Common myeloid progenitor, CD34-positive (primary cell): ENCODE measurements at regions of chr12 and their contacts with region 1.

Region 1: DNA sequence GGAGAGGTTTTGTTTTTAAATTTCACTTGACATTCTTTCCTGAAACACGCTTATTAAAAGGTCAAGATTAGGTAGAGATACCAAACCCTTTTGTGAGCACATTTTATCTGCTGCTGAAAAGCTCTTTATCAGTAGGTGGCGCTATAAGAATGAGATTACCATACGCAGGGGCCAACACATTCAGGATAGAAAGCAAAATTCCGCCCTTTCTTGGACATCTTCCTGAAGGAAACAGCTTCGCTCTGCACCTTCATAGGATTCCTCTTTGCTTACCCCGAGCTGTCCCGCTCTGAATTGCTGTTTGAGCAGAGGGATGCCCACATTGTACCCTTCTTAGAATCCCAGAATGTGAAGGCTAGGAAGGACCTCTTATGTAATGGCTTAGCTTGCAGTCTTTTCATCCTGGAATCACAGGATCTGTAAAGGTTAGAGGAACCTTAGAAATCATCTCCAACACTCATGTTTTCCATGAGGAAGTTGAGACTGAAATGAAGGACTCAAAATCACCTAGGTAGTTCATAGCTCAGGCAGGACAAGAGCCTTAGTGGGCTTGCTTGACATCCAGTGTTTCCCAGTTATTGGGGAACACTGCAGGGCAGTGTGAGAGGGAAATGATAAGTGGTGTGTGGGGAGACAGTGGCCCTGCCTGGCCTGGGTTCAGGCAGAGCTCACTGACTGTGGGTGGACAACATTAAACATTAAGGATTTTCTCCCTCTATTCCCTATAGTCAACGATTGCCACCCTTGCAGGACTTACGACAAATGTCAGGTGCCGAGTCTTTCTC is 38.7 kb upstream of the CRY1 start:
- DNase-seq: peak; percentile 39 to 51 (median 40)
- H3K4me3 ChIP-seq: no peak overlapping the region
- H3K27ac ChIP-seq: no peak overlapping the region
- H3K4me1 ChIP-seq: peaks cover 0 to 6% (median 4%) of the 10 kb centered on the region in 4 experiments
- H3K27me3 ChIP-seq: no peaks in the 10 kb centered on the region

Region 2: GRCh38 chr12:107115119-107115518 is 16.9 kb before region 1 on chr12:
- CTCF ChIA-PET with region 1: interaction called, 28 read pairs
- POLR2A ChIA-PET with region 1: no interaction called
- DNase-seq: no peak
- H3K4me3 ChIP-seq: no peak overlapping the region
- H3K27ac ChIP-seq: no peak overlapping the region
- H3K4me1 ChIP-seq: no peaks in the 10 kb centered on the region
- H3K27me3 ChIP-seq: peaks cover 0 to 6% (median 0%) of the 10 kb centered on the region in 5 experiments

Region 3: GRCh38 chr12:107145397-107145796 is 13.4 kb after region 1 on chr12:
- CTCF ChIA-PET with region 1: interaction called, 32 read pairs
- POLR2A ChIA-PET with region 1: no interaction called
- DNase-seq: no peak
- H3K4me3 ChIP-seq: no peak overlapping the region
- H3K27ac ChIP-seq: no peak overlapping the region
- H3K4me1 ChIP-seq: no peaks in the 10 kb centered on the region
- H3K27me3 ChIP-seq: no peaks in the 10 kb centered on the region

Region 4: GRCh38 chr12:107223821-107224220 is 91.8 kb after region 1 on chr12:
- CTCF ChIA-PET with region 1: no interaction called
- POLR2A ChIA-PET with region 1: no interaction called
- DNase-seq: peak in 2 of 3 donors; percentile 8 to 21
- H3K4me3 ChIP-seq: no peak overlapping the region
- H3K27ac ChIP-seq: no peak overlapping the region
- H3K4me1 ChIP-seq: no peaks in the 10 kb centered on the region
- H3K27me3 ChIP-seq: peaks cover 0 to 8% (median 0%) of the 10 kb centered on the region in 5 experiments

Region 5: DNA sequence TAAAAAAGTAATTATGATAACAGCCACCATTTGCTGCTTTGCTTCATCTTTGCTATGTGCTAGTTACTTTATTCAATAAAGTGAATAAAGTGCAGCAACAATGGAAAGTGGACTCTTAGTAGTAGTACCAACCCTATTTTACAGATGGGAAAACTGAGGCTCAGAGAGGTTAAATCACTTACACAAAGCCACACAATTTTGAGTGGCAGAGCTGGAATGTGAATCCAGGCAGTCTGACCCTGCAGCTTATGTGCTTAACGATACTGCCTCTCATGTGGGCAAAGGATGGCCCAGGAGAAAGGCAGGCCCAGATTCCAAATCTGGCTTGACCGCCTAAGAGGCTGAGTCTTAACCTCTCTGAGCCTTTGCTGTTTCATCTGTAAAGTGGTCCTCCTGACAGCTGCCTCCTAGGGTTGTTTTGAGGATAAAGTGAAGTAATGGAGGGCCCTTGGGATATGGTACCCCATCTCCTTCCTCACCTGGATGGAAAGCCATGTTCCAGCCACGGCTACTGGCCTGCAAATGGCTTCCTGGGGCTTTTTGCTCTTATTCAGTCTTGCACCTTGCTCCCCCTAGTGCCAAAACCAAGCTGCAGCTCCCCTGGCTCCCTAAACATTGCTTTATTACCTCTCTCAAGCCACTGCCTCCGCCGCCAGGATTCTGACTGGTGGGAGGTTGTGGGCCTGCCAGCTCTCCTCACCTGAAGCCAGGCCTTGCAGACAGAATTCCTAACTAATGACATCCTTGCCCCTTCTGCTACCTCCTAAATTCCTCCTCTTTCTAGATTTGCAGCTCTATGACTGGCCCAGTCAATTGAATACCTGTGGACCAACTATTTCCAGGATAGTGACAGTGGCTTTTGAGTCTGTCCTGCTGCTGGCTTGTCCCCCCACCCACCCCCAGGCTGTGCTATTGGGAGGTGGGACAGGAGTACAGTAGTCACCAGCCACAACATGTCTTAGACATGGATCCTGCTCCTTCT is 270.3 kb after region 1 on chr12:
- CTCF ChIA-PET with region 1: interaction called, 162 read pairs
- POLR2A ChIA-PET with region 1: no interaction called
- DNase-seq: peak; percentile 72 to 79 (median 78)
- H3K4me3 ChIP-seq: no peak overlapping the region
- H3K27ac ChIP-seq: no peak overlapping the region
- H3K4me1 ChIP-seq: peaks cover 0 to 12% (median 9%) of the 10 kb centered on the region in 4 experiments
- H3K27me3 ChIP-seq: no peaks in the 10 kb centered on the region

Region 6: DNA sequence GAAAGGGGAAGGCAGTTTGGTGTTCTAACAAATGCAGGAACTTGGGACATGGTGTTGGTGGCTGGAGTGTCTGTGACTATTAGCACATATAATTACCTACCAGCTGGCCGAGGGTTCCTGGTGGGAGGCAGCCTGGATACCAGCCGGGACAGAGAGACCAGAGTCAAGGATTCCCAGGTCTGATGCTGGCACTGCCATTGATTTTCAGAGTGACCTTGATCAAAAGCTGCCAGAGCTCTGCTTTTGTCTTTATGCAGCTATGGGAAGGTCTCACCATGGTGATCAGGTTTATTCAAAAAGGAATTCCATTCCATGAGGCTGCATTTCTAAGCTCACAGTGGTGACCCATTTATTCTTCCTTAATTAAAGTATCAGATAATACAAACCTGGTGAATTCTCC is 452.5 kb after region 1 on chr12:
- CTCF ChIA-PET with region 1: interaction called, 10 read pairs
- POLR2A ChIA-PET with region 1: no interaction called
- DNase-seq: no peak
- H3K4me3 ChIP-seq: no peak overlapping the region
- H3K27ac ChIP-seq: no peak overlapping the region
- H3K4me1 ChIP-seq: peaks cover 0 to 1% (median 0%) of the 10 kb centered on the region in 4 experiments
- H3K27me3 ChIP-seq: peaks cover 0 to 21% (median 0%) of the 10 kb centered on the region in 5 experiments

Region 7: GRCh38 chr12:107607464-107608392 is 475.7 kb after region 1 on chr12:
- CTCF ChIA-PET with region 1: interaction called, 256 read pairs
- POLR2A ChIA-PET with region 1: no interaction called
- DNase-seq: peak; percentile 70 to 87 (median 77)
- H3K4me3 ChIP-seq: no peak overlapping the region
- H3K27ac ChIP-seq: no peak overlapping the region
- H3K4me1 ChIP-seq: no peaks in the 10 kb centered on the region
- H3K27me3 ChIP-seq: no peaks in the 10 kb centered on the region

Region 8: GRCh38 chr12:107622005-107622404 is 490.0 kb after region 1 on chr12:
- CTCF ChIA-PET with region 1: interaction called, 10 read pairs
- POLR2A ChIA-PET with region 1: no interaction called
- DNase-seq: peak in 2 of 3 donors; percentile 3 to 9
- H3K4me3 ChIP-seq: no peak overlapping the region
- H3K27ac ChIP-seq: no peak overlapping the region
- H3K4me1 ChIP-seq: no peaks in the 10 kb centered on the region
- H3K27me3 ChIP-seq: no peaks in the 10 kb centered on the region